Dendritic cell treated with granulocyte-macrophage colony-stimulating factor and Interleukin-4, amounts not matched to agents 40 ng/mL and 50 ng/mL, for 4 days (primary cell): ENCODE measurements at regions of chr7 and their contacts with region 1.

Region 1: GRCh38 chr7:106952658-106953231 is 87.7 kb downstream of the PIK3CG start:
- H3K4me3 Mint-ChIP-seq: peak overlapping the region; percentile 64
- H3K27ac Mint-ChIP-seq: peak overlapping the region; percentile 79
- H3K4me1 Mint-ChIP-seq: peaks cover 52% of the 10 kb centered on the region
- H3K27me3 Mint-ChIP-seq: no peaks in the 10 kb centered on the region

Region 2: DNA sequence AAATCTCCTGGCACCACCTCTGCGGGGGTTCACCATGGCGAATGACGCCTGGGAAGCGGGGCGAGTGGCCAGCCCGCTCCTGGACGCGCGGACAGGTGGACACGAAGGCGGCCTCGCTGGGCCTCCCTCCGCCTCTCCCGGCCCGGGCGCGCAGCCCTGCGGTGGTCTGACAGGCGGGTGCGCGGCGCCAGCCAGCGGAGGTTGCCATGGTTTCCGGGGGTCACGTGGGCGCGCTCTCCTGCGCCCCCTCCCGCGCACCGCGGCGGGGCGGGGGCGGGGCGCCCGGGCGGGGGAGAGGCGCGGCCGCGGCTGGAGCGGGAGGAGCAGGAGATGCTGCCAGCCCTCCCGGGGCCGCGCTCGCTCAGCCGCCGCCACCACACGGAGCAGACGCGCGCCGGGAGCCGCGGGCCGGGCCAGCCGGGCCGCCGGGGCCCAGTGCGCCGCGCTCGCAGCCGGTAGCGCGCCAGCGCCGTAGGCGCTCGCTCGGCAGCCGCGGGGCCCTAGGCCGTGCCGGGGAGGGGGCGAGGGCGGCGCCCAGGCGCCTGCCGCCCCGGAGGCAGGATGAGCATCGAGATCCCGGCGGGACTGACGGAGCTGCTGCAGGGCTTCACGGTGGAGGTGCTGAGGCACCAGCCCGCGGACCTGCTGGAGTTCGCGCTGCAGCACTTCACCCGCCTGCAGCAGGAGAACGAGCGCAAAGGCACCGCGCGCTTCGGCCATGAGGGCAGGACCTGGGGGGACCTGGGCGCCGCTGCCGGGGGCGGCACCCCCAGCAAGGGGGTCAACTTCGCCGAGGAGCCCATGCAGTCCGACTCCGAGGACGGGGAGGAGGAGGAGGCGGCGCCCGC is 91.8 kb after region 1 on chr7 and contains the start of gene PRKAR2B:
- intact Hi-C with region 1: loop called (anchors 5 kb)
- H3K4me3 Mint-ChIP-seq: peak within 1 kb of the TSS; percentile 97
- H3K27ac Mint-ChIP-seq: peak within 1 kb of the TSS; percentile 86
- H3K4me1 Mint-ChIP-seq: peaks cover 34% of the 10 kb centered on the region
- H3K27me3 Mint-ChIP-seq: peaks cover 3% of the 10 kb centered on the region